Activated CD4-positive, alpha-beta T cell treated with anti-CD3 and anti-CD28 coated beads for 36 hours (primary cell): ENCODE measurements at regions of chr20 and their contacts with region 1.

Region 1: GRCh38 chr20:35146920-35147574 is at the start of gene EDEM2:
- DNase-seq: peak; percentile 97
- ATAC-seq: peak; percentile 92
- H3K4me3 Mint-ChIP-seq: peak within 1 kb of the TSS; percentile 97
- H3K27ac Mint-ChIP-seq: peak within 1 kb of the TSS; percentile 95
- H3K4me1 Mint-ChIP-seq: peaks cover 29% of the 10 kb centered on the region
- H3K27me3 Mint-ChIP-seq: no peaks in the 10 kb centered on the region
- total RNA-seq, gene EDEM2: 16.5 to 18.2 TPM

Region 2: DNA sequence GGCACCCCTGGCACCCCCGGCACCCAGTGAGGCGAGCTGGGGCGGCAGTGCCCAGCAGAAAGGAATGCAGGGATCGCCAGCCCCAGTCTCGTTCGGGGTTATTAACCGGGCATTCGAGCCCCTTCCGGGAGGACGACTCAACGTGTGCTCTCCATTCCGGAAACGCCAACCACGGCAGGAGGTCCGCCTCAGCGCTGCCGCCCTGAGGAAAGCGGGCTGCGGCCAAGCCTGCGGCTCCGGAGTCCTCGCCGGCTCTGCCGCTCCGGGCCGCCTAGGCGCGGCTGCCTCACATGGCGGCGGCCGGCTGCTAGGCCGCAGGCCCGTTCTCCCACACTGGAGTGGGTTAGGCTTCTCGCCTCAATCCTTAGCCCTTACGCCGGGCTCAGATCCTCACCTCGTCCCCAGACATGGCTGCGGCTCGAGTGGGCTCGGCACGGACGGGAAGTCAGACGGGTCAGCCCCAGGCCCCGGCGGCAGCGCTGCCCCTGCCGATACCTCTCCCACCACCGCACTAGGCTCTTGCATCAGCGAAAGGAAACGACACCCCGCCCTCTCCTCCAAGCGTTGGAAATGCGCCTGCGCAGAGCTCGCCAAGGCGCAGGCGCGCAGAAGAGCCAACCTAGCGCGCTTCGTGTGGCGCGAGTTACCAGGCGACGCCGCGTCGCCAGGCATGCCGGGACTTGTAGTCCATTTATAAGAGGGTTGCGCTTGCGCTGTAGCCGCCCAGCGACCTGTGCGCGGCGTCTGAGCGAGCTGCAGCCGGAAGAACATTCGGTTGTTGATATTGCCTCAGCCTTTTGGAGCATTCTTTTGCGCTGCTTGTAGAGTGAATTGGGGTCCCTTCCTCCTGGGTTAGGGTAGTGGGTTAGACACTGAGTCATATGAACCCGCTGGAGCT is 1035.1 kb before region 1 on chr20 and contains the start of gene EIF2S2:
- CTCF ChIA-PET with region 1: no interaction called
- POLR2A ChIA-PET with region 1: no interaction called
- intact Hi-C with region 1: loop called in 1 of 2 experiments (anchors 5 kb)
- DNase-seq: peak; percentile 97
- ATAC-seq: peak; percentile 88
- H3K4me3 Mint-ChIP-seq: peak within 1 kb of the TSS; percentile 86
- H3K27ac Mint-ChIP-seq: peak within 1 kb of the TSS; percentile 97
- H3K4me1 Mint-ChIP-seq: peaks cover 38% of the 10 kb centered on the region
- H3K27me3 Mint-ChIP-seq: no peaks in the 10 kb centered on the region
- total RNA-seq, gene EIF2S2: 179 to 187 TPM

Region 3: DNA sequence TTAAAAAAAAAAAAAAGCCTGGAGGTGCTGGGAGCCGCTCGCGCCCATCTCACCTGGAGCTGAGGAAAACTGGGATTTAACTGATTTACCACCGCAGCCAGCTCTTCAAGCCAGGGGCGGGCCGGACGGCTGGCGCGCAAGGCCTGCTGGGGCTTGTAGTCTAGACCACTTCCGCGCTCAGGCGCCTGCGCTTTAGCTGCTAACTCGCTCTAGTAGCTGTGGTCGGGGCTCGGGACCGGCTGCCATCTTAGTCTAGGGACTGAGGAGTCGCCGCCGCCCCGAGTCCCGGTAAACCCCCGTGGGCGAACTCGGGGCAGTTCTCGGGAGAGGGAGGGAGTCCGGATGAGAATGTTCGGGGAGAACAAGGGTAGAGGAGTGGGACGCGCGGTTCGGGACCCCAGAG is 784.0 kb before region 1 on chr20 and contains the start of gene ITCH:
- CTCF ChIA-PET with region 1: no interaction called
- POLR2A ChIA-PET with region 1: no interaction called
- intact Hi-C with region 1: loop called in 1 of 2 experiments (anchors 2 kb)
- DNase-seq: peak; percentile 97
- ATAC-seq: peak; percentile 99
- H3K4me3 Mint-ChIP-seq: peak within 1 kb of the TSS; percentile 91
- H3K27ac Mint-ChIP-seq: peak within 1 kb of the TSS; percentile 98
- H3K4me1 Mint-ChIP-seq: peaks cover 38% of the 10 kb centered on the region
- H3K27me3 Mint-ChIP-seq: no peaks in the 10 kb centered on the region
- total RNA-seq, gene ITCH: 41.4 to 43.5 TPM

Region 4: GRCh38 chr20:34825530-34826362 is 321.3 kb before region 1 on chr20 and contains the start of gene NCOA6:
- CTCF ChIA-PET with region 1: interaction called, 3 read pairs
- POLR2A ChIA-PET with region 1: no interaction called
- intact Hi-C with region 1: loop called in 1 of 2 experiments (anchors 1 kb)
- DNase-seq: peak; percentile 95
- ATAC-seq: peak; percentile 67
- H3K4me3 Mint-ChIP-seq: peak within 1 kb of the TSS; percentile 86
- H3K27ac Mint-ChIP-seq: peak within 1 kb of the TSS; percentile 95
- H3K4me1 Mint-ChIP-seq: peaks cover 30% of the 10 kb centered on the region
- H3K27me3 Mint-ChIP-seq: no peaks in the 10 kb centered on the region
- total RNA-seq, gene NCOA6: 20.3 to 31.1 TPM

Region 5: DNA sequence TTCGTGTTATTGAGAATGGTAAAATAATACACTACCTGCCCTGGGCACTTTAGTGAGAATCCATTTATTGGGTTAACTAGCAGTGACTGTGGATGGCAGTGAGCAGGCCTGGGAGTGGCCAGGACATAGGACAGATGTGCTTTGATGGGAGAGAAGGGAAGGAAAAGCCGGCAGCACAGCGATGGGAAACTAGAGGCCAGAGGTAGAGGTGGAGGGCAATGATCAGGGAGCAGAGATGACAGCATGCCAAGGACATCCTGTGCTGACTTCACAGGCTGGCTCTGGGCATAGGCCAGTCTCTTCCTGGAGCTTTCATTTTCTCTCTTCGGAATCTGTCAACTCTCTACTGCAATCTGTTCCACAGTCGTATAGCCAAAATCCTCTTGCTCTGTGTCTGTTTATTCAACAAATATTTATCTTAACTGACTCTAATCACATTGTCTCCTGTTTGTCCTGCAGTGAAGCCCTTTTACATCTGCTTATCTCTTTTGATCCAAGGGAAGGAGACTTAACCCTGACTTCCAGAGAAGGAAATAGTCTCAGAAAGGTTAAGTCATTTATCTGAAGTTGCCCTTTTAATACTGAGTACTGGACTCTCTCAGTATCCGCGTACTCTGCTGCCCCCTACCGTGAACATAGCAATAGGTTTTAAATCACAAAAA is 61.0 kb after region 1 on chr20:
- CTCF ChIA-PET with region 1: interaction called, 19 read pairs
- POLR2A ChIA-PET with region 1: no interaction called
- intact Hi-C with region 1: loop called (anchors 1 kb)
- DNase-seq: peak; percentile 88
- ATAC-seq: peak; percentile 95
- H3K4me3 Mint-ChIP-seq: no peak overlapping the region
- H3K27ac Mint-ChIP-seq: no peak overlapping the region
- H3K4me1 Mint-ChIP-seq: no peaks in the 10 kb centered on the region
- H3K27me3 Mint-ChIP-seq: no peaks in the 10 kb centered on the region

Region 6: DNA sequence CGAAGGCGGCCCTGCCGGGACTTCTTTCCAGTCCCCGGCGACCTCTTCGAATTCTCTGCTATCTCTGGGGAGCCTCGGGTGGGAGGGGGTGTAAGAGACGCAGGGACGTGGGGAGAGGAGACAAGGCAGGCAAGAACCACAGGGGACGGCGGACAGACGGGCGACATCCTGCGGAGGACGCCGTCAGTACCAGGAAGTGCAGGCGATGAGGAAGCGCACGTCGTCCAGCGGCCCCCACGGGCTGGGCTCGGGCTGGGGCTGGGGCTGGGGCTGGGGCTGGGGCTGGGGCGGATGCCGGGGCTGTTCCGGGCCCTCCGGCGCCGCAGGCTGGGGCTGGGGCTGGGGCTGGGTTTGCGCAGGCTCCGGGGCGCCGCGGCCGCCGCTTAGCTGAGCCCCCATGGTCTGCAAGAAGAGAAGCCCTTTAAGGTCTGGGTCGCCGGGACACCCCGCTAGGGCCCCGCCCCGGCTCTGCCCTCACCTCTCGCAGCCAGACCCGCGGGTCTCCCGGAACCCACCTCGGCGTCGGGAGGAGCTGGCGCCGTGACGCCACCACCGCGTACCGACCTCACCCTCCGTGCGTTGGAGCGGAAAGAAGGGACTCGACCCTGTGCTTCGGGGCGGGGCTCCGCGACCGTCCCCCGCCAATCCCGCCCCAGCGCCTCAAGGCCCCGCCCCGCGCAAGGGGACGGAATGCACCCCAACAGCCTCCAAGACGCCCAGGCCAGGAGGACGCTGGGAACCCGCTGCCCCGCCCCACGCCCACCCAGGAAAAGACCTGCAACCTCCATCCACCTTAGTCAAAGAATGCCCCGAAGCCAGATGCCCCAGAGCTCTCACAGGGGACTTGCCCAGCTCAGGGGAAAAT is 130.7 kb after region 1 on chr20 and contains the start of gene MMP24OS:
- CTCF ChIA-PET with region 1: interaction called, 3 read pairs
- POLR2A ChIA-PET with region 1: no interaction called
- intact Hi-C with region 1: loop called (anchors 1 to 5 kb)
- DNase-seq: peak; percentile 94
- ATAC-seq: peak; percentile 96
- H3K4me3 Mint-ChIP-seq: peak within 1 kb of the TSS; percentile 99
- H3K27ac Mint-ChIP-seq: peak within 1 kb of the TSS; percentile 97
- H3K4me1 Mint-ChIP-seq: peaks cover 9% of the 10 kb centered on the region
- H3K27me3 Mint-ChIP-seq: no peaks in the 10 kb centered on the region
- total RNA-seq, gene MMP24OS: 44.6 to 56.8 TPM

Region 7: GRCh38 chr20:35541783-35542588 is 394.9 kb after region 1 on chr20 and contains the start of gene ERGIC3:
- CTCF ChIA-PET with region 1: no interaction called
- POLR2A ChIA-PET with region 1: no interaction called
- intact Hi-C with region 1: loop called in 1 of 2 experiments (anchors 5 kb)
- DNase-seq: peak; percentile 99
- ATAC-seq: peak; percentile 99
- H3K4me3 Mint-ChIP-seq: peak within 1 kb of the TSS; percentile 83
- H3K27ac Mint-ChIP-seq: peak within 1 kb of the TSS; percentile 83
- H3K4me1 Mint-ChIP-seq: peaks cover 15% of the 10 kb centered on the region
- H3K27me3 Mint-ChIP-seq: no peaks in the 10 kb centered on the region
- total RNA-seq, gene ERGIC3: 109 to 127 TPM